Activated CD4-positive, alpha-beta T cell treated with anti-CD3 and anti-CD28 coated beads for 36 hours (primary cell): ENCODE measurements at regions of chr20 and their contacts with region 1.

Region 1: DNA sequence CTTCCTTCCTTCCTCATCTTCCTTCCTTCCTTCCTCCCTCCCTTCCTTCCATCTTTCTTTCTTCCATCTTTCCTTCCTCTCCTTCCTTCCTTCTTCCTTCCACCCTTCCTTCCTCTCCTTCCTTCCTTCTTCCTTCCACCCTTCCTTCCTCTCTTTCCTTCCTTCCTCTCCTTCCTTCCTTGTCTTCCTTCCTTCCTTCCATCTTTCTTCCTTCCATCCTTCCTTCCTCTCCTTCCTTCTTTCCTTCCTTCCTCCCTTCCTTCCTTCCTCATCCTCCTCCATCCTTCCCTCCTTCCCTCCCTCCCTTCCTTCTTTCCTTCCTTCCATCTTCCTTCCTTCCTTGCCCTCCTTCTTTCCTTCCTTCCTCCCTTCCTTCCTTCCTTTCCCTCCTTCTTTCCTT is 361.4 kb upstream of the TSHZ2 start:
- DNase-seq: no peak
- ATAC-seq: no peak
- H3K4me3 Mint-ChIP-seq: no peak overlapping the region
- H3K27ac Mint-ChIP-seq: no peak overlapping the region
- H3K4me1 Mint-ChIP-seq: peaks cover 6% of the 10 kb centered on the region
- H3K27me3 Mint-ChIP-seq: peaks cover 4% of the 10 kb centered on the region

Region 2: GRCh38 chr20:52494244-52494643 is 116.5 kb before region 1 on chr20:
- CTCF ChIA-PET with region 1: no interaction called
- POLR2A ChIA-PET with region 1: no interaction called
- intact Hi-C with region 1: no loop called
- DNase-seq: peak; percentile 80
- ATAC-seq: peak; percentile 98
- H3K4me3 Mint-ChIP-seq: peak overlapping the region; percentile 9
- H3K27ac Mint-ChIP-seq: peak overlapping the region; percentile 40
- H3K4me1 Mint-ChIP-seq: peaks cover 18% of the 10 kb centered on the region
- H3K27me3 Mint-ChIP-seq: no peaks in the 10 kb centered on the region

Region 3: DNA sequence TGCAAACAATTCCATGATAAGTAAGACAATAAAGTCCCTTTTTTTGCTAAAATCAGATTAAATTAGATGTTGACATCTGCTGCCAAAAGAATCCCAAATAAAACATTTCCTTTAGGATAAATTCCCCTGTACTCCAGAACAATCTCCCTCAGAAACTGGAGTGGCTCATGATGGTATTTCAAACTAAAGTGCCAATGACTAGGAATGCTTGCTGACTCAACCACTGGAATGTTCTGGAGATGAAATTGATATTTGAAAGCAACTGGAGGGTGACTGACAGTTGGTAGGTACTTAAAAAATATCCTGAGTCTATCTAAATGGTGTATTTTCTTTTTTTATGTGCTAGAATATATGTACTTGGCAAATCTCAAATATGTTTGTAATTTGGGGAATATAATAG is 11.3 kb after region 1 on chr20:
- CTCF ChIA-PET with region 1: no interaction called
- POLR2A ChIA-PET with region 1: no interaction called
- intact Hi-C with region 1: no loop called
- DNase-seq: no peak
- ATAC-seq: no peak
- H3K4me3 Mint-ChIP-seq: no peak overlapping the region
- H3K27ac Mint-ChIP-seq: no peak overlapping the region
- H3K4me1 Mint-ChIP-seq: peaks cover 8% of the 10 kb centered on the region
- H3K27me3 Mint-ChIP-seq: no peaks in the 10 kb centered on the region

Region 4: DNA sequence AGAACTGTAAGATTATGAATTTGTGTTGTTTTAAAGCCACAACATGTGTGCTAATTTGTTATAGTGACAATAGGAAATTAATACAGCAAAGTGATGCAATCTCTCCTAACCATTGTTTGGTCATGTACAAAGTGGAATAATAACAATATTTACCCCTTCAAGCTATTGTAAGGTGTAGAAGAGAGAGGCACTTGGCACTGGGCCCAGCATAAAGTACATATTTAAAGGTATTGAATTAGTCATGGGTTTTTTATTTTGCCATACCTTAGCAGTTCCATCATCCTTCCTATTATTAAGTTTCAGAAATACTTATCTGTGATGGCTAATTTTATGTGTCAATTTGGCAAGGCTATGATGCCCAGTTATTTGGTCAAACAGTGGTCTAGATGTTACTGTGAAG is 39.0 kb after region 1 on chr20:
- CTCF ChIA-PET with region 1: no interaction called
- POLR2A ChIA-PET with region 1: no interaction called
- intact Hi-C with region 1: loop called in 1 of 2 experiments (anchors 2 kb)
- DNase-seq: no peak
- ATAC-seq: no peak
- H3K4me3 Mint-ChIP-seq: no peak overlapping the region
- H3K27ac Mint-ChIP-seq: no peak overlapping the region
- H3K4me1 Mint-ChIP-seq: no peaks in the 10 kb centered on the region
- H3K27me3 Mint-ChIP-seq: no peaks in the 10 kb centered on the region